A673 (cell line): ENCODE measurements at regions of chr11 and their contacts with region 1.

Region 1: DNA sequence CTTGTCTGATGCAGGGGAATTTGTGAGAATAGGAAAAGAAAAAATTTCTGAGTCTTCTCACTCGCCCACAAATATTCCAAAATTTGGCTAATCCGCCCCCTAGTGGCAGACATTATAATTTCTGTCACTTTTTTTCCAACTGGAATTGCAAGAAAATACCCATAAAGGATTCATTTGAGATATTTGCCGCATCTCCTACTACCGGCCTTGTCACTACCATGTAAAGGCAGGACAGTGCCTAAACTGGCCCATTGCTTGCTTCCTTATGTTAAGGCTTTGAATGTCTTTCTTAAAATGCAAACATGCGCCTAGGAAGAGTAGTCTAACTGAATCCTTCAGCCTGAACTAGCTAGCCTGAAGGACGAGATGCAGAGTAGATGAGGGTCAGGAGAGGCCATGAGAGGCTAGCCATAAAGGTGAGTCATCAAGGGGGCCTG is 9.3 kb upstream of the CEP295 start:
- DNase-seq: peak; percentile 78
- H3K4me3 ChIP-seq: no peak overlapping the region
- H3K27ac ChIP-seq: no peak overlapping the region
- H3K4me1 ChIP-seq: no peaks in the 10 kb centered on the region
- H3K27me3 ChIP-seq: peaks cover 7% of the 10 kb centered on the region
- CTCF ChIP-seq: peak; percentile 82

Region 2: GRCh38 chr11:92941676-92942571 is 710.3 kb before region 1 on chr11:
- CTCF ChIA-PET with region 1: no interaction called
- POLR2A ChIA-PET with region 1: no interaction called
- intact Hi-C with region 1: loop called (anchors 10 kb)
- DNase-seq: peak; percentile 61
- H3K4me3 ChIP-seq: no peak overlapping the region
- H3K27ac ChIP-seq: no peak overlapping the region
- H3K4me1 ChIP-seq: no peaks in the 10 kb centered on the region
- H3K27me3 ChIP-seq: peaks cover 5% of the 10 kb centered on the region
- CTCF ChIP-seq: peak; percentile 86

Region 3: DNA sequence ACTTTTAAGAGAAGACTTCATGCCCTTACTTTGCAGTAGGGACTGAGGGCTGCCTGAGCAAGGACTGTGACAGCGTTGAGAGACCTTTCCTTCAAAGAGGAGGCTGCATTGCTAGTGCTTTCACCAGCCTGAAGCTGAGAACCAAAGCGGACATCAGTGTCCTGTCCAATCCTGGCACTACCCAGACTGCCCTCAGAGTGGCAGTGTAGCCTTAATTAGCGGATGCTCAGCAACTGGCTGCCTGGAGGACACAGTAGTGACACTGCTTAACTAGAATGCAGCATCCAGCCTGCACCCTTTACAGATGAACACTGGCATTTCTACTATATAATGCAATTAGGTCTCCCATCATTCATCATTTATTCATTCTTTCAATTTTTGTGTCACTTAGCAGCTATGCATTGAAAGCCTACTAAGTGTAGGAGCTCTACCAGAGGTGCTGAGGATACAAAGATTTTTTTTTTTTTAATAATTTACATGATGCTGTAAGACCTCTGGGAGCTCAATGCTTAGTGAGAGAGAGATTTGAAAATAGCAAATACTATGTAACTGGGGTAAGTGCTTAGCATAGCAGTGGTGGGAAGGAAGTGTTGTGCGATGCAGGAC is 417.5 kb before region 1 on chr11:
- CTCF ChIA-PET with region 1: interaction called, 6 read pairs
- POLR2A ChIA-PET with region 1: no interaction called
- intact Hi-C with region 1: loop called (anchors 1 kb)
- DNase-seq: peak; percentile 84
- H3K4me3 ChIP-seq: no peak overlapping the region
- H3K27ac ChIP-seq: no peak overlapping the region
- H3K4me1 ChIP-seq: no peaks in the 10 kb centered on the region
- H3K27me3 ChIP-seq: peaks cover 16% of the 10 kb centered on the region
- CTCF ChIP-seq: peak; percentile 93

Region 4: DNA sequence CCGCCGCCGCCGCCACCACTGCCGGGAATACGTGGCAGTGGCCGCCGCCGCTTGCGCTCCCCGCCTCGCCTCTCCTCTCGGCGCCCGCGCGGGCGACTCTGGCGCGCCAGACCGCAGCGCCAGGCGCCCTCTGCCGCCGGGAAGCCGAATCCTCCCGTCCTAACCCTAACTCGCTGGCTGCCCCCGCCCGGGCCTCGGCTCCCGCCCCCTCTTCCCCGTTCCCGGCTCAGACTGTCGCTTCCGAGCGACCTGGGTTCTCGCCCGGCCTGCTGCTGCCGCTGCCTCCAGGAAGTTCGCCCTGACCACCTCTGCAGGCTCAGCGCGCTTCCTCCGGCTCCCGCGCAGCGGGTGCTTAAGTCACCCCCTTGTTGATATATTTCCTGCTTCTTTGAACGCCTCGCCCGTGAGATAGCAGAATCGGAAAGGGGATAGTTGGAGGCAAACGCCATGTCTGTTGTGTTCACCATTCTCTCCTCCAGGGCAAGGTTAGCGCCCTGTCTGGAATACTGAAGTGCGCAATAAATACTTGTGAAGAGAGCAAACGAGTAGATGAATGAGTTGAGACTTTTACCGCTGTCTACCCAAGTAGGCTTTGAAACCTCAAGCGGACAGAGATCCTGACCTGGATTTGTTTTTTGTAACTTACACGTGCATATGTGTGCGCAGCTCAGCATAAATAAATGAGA is 108.7 kb before region 1 on chr11 and contains the start of gene SMCO4:
- CTCF ChIA-PET with region 1: no interaction called
- POLR2A ChIA-PET with region 1: no interaction called
- intact Hi-C with region 1: loop called (anchors 5 kb)
- DNase-seq: peak; percentile 91
- H3K4me3 ChIP-seq: peak within 1 kb of the TSS; percentile 67
- H3K27ac ChIP-seq: no peak within 1 kb of the TSS
- H3K4me1 ChIP-seq: no peaks in the 10 kb centered on the region
- H3K27me3 ChIP-seq: no peaks in the 10 kb centered on the region
- CTCF ChIP-seq: peak; percentile 70
- total RNA-seq, gene SMCO4: 9.3 and 11.9 TPM in 2 replicates

Region 5: GRCh38 chr11:94283678-94284077 is 631.5 kb after region 1 on chr11:
- CTCF ChIA-PET with region 1: interaction called, 13 read pairs
- POLR2A ChIA-PET with region 1: no interaction called
- intact Hi-C with region 1: no loop called
- DNase-seq: no peak
- H3K4me3 ChIP-seq: no peak overlapping the region
- H3K27ac ChIP-seq: no peak overlapping the region
- H3K4me1 ChIP-seq: no peaks in the 10 kb centered on the region
- H3K27me3 ChIP-seq: no peaks in the 10 kb centered on the region
- CTCF ChIP-seq: no peak